ENCODE measurements at regions of chr1 and their contacts with region 1.

Region 1: GRCh38 chr1:111222308-111223125 is 5.0 kb upstream of the CHI3L2 start:
- DNase-seq: peak; percentile 89
- H3K4me3 ChIP-seq: peak overlapping the region; percentile 53
- H3K27ac ChIP-seq: peak overlapping the region; percentile 97
- H3K4me1 ChIP-seq: peaks cover 84% of the 10 kb centered on the region
- CTCF ChIP-seq: peak; percentile 99

Region 2: GRCh38 chr1:111030590-111030989 is 191.9 kb before region 1 on chr1:
- CTCF ChIA-PET with region 1: no interaction called
- POLR2A ChIA-PET with region 1: no interaction called
- intact Hi-C with region 1: loop called (anchors 2 kb)
- DNase-seq: peak; percentile 83
- H3K4me3 ChIP-seq: no peak overlapping the region
- H3K27ac ChIP-seq: no peak overlapping the region
- H3K4me1 ChIP-seq: no peaks in the 10 kb centered on the region
- CTCF ChIP-seq: peak; percentile 98

Region 3: GRCh38 chr1:111154021-111154999 is 68.2 kb before region 1 on chr1:
- CTCF ChIA-PET with region 1: interaction called, 3 read pairs
- POLR2A ChIA-PET with region 1: interaction called, 12 read pairs
- intact Hi-C with region 1: no loop called
- DNase-seq: no peak
- H3K4me3 ChIP-seq: no peak overlapping the region
- H3K27ac ChIP-seq: no peak overlapping the region
- H3K4me1 ChIP-seq: peaks cover 15% of the 10 kb centered on the region
- CTCF ChIP-seq: no peak

Region 4: GRCh38 chr1:111346089-111346885 is 123.8 kb after region 1 on chr1:
- CTCF ChIA-PET with region 1: interaction called, 3 read pairs
- POLR2A ChIA-PET with region 1: no interaction called
- intact Hi-C with region 1: loop called (anchors 5 kb)
- DNase-seq: peak; percentile 78
- H3K4me3 ChIP-seq: peak overlapping the region; percentile 62
- H3K27ac ChIP-seq: no peak overlapping the region
- H3K4me1 ChIP-seq: peaks cover 8% of the 10 kb centered on the region
- CTCF ChIP-seq: peak; percentile 60

Region 5: DNA sequence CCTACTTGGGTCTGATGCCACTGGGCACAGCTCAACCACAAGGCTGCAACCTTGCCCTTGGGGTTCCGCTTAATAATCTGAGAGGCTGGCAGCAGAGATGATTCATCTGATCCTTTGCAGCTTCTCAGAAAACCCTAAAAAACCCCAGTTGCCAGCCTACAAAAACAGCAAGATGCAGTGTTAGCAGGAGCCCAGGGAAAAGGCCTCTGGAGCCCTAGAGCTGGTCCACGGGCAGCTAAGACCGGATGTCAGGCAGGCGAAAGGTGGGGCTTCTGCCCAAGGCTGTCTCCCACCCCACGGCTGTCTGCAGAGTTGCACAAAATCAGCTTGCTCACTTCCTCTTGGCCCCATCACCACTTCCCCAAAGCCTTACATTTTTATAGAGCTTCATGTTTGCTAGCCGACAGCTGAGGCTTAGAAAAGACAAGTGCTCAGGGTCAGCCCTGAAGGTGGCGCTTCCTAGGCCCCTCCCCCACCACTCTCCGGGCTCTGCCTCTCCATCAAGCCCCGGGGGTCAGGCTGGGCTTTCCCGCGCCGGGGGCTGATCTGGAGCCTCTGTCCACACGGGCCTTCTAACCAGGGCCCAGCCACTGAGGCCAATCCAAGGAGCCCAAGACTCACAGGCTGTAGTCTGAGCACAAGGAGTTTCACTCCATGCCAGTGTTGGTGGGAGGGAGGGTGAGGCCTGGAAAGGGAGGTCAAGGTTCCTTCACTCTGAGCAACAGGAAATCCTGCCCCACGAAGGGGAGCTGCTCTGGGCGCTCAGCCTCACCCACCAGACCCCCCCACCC is 285.1 kb after region 1 on chr1:
- CTCF ChIA-PET with region 1: interaction called, 4 read pairs
- POLR2A ChIA-PET with region 1: no interaction called
- intact Hi-C with region 1: loop called (anchors 2 kb)
- DNase-seq: peak; percentile 97
- H3K4me3 ChIP-seq: peak overlapping the region; percentile 63
- H3K27ac ChIP-seq: peak overlapping the region; percentile 97
- H3K4me1 ChIP-seq: peaks cover 75% of the 10 kb centered on the region
- CTCF ChIP-seq: no peak

Measured in OCI-LY7 (cell line).